H1 (cell line): ENCODE measurements at regions of chr20 and their contacts with region 1.

Region 1: GRCh38 chr20:32789896-32790750 is 27.9 kb downstream of the DNMT3B start:
- DNase-seq: peak in 1 of 2 experiments; percentile 78
- H3K4me3 ChIP-seq: no peak overlapping the region
- H3K27ac ChIP-seq: no peak overlapping the region
- H3K4me1 ChIP-seq: peaks cover 0 to 9% (median 2%) of the 10 kb centered on the region in 4 experiments; a peak in 4 of 7 replicates
- H3K27me3 ChIP-seq: no peaks in the 10 kb centered on the region
- CTCF ChIP-seq: peak; percentile 75 to 97 (median 96)
- EP300 ChIP-seq: no peak
- POLR2A ChIP-seq: peak in 1 of 2 experiments; percentile 74; a peak in 2 of 3 replicates
- RAD21 ChIP-seq: peak; percentile 66 to 67

Region 2: DNA sequence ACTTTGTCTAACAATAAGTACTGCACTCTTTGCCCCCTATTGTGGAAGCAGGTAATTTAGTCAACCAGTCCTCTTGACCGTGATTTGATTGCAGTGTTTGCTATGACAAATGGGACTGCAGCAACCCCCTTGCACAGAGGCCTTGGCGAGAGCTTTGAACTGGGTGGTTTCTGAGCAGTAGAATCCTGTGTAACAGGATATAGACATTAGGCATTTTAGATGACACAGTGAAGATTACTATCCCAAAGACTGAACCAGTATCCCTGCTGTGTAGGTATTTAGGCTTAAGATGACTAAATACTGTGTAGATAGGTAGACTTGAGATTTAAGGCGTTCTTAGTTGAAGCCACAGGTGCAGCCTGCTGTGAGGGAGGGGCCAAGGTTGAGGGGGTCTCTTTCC is 18.1 kb before region 1 on chr20:
- CTCF ChIA-PET with region 1: interaction called, 88 read pairs
- POLR2A ChIA-PET with region 1: interaction called, 37 read pairs
- DNase-seq: no peak
- H3K4me3 ChIP-seq: no peak overlapping the region; a peak in 1 of 8 replicates
- H3K27ac ChIP-seq: no peak overlapping the region
- H3K4me1 ChIP-seq: peaks cover 12 to 32% (median 22%) of the 10 kb centered on the region in 4 experiments; a peak in 6 of 7 replicates
- H3K27me3 ChIP-seq: no peaks in the 10 kb centered on the region
- CTCF ChIP-seq: no peak
- EP300 ChIP-seq: no peak
- POLR2A ChIP-seq: no peak
- RAD21 ChIP-seq: no peak

Region 3: GRCh38 chr20:32807706-32808105 is 17.6 kb after region 1 on chr20:
- CTCF ChIA-PET with region 1: interaction called, 19 read pairs
- POLR2A ChIA-PET with region 1: interaction called, 112 read pairs
- DNase-seq: peak in 1 of 2 experiments; percentile 73
- H3K4me3 ChIP-seq: no peak overlapping the region
- H3K27ac ChIP-seq: 0 out of 2 replicates have a peak overlapping the region, but pooled peaks have one; percentile 36
- H3K4me1 ChIP-seq: peaks cover 8 to 33% (median 25%) of the 10 kb centered on the region in 4 experiments
- H3K27me3 ChIP-seq: no peaks in the 10 kb centered on the region
- CTCF ChIP-seq: no peak
- EP300 ChIP-seq: no peak
- POLR2A ChIP-seq: peak in 1 of 2 experiments; percentile 44; a peak in 1 of 3 replicates
- RAD21 ChIP-seq: no peak

Region 4: DNA sequence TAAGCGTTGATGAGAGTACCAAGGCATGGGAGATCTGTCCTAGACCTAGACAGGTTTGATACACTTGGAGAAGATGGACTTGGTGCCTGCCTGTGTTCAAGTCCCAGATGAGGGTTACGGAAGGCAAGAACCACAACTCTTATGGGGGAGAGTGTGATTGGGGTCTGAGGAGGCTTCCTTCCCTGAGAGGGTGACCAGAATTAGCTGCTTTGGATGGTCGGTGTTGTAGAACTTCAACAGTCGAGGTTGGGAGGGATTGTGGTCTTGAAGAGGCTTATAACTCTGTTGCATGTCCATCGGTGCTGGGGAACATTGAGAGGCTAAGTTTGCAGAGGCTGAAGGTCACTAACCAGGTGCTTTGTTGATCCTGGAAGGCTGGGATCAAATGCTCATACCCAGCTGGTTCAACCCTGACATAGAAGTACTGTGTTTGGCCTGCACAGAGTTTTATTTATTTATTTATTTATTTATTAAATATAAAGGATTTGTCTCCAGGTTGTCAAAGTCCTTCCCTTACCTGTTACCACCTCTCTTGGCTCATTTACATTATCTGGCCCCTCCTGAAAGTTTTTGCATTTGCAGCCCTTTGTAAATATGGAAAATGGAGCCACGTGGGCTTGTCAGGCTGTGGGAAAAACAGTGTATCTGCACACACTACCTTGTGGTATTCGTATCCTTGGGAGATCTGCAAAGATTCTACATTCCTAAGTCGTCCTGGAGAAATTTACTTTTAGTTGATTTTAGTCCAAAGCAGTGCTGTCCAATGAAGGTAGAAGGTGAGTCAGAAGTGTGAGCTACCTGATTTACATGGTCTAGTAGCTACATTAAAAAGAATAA is 52.8 kb after region 1 on chr20:
- CTCF ChIA-PET with region 1: interaction called, 12 read pairs
- POLR2A ChIA-PET with region 1: interaction called, 3 read pairs
- DNase-seq: no peak
- H3K4me3 ChIP-seq: no peak overlapping the region
- H3K27ac ChIP-seq: no peak overlapping the region
- H3K4me1 ChIP-seq: peaks cover 0 to under 1% (median 0%) of the 10 kb centered on the region in 4 experiments; a peak in 1 of 7 replicates
- H3K27me3 ChIP-seq: no peaks in the 10 kb centered on the region
- CTCF ChIP-seq: no peak
- EP300 ChIP-seq: no peak
- POLR2A ChIP-seq: no peak
- RAD21 ChIP-seq: no peak